Caco-2 (cell line): ENCODE measurements at regions of chr11 and their contacts with region 1.

Region 1: GRCh38 chr11:72787216-72788104 is 6.4 kb downstream of the STARD10 start:
- DNase-seq: peak; percentile 90 to 98
- H3K4me3 ChIP-seq: no peak overlapping the region; the same call in 1 of the 2 replicates
- H3K4me3 Mint-ChIP-seq: peak overlapping the region; percentile 50
- H3K27ac Mint-ChIP-seq: peak overlapping the region; percentile 99
- H3K4me1 ChIP-seq: peaks cover 75% of the 10 kb centered on the region
- H3K4me1 Mint-ChIP-seq: peaks cover 67% of the 10 kb centered on the region
- H3K27me3 ChIP-seq: no peaks in the 10 kb centered on the region
- H3K27me3 Mint-ChIP-seq: no peaks in the 10 kb centered on the region
- CTCF ChIP-seq: peak; percentile 65 to 72

Region 2: DNA sequence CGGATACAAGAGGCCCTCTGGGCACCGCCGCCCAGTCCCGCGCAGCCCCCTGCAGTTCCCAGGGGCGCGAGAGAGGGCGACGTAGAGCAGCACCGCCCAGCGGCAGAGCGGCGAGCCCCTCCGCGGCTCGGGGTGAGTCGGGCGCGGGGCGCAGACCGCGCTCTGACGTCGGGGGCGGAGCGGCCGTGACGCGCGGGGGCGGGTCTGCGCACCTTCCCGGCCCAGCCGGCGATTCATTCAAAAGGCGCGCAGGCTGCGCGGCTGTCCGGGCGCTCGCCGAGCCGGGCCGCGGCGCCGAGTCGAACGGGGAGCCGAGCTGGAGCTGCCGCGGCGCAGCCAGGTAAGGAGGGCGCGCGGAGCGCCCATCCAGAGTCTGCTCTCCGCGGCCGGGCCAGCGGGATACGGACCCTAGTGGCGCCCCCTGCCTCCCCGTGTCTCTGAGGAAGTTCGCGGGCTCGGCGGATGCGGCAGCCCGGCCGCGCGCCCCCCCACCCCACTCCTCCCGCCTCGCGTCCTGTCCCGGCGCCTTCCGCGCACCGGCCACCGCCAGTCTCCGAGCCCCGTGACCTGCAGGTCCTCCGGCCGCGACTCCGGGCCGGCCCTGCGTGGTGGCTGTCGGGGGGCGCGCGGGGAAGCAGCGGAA is 588.8 kb after region 1 on chr11 and contains the start of gene RELT:
- CTCF ChIA-PET with region 1: no interaction called
- POLR2A ChIA-PET with region 1: interaction called, 11 read pairs
- intact Hi-C with region 1: no loop called
- DNase-seq: peak; percentile 92 to 99
- H3K4me3 ChIP-seq: peak within 1 kb of the TSS; percentile 91
- H3K4me3 Mint-ChIP-seq: peak within 1 kb of the TSS; percentile 83
- H3K27ac Mint-ChIP-seq: peak within 1 kb of the TSS; percentile 37
- H3K4me1 ChIP-seq: peaks cover 11% of the 10 kb centered on the region; the same call in 1 of the 2 replicates
- H3K4me1 Mint-ChIP-seq: peaks cover 18% of the 10 kb centered on the region
- H3K27me3 ChIP-seq: no peaks in the 10 kb centered on the region
- H3K27me3 Mint-ChIP-seq: no peaks in the 10 kb centered on the region
- CTCF ChIP-seq: peak; percentile 96 to 98
- total RNA-seq, gene RELT: 11.7 and 12.7 TPM in 2 replicates